H1 (cell line): ENCODE measurements at regions of chr2 and their contacts with region 1.

Region 1: DNA sequence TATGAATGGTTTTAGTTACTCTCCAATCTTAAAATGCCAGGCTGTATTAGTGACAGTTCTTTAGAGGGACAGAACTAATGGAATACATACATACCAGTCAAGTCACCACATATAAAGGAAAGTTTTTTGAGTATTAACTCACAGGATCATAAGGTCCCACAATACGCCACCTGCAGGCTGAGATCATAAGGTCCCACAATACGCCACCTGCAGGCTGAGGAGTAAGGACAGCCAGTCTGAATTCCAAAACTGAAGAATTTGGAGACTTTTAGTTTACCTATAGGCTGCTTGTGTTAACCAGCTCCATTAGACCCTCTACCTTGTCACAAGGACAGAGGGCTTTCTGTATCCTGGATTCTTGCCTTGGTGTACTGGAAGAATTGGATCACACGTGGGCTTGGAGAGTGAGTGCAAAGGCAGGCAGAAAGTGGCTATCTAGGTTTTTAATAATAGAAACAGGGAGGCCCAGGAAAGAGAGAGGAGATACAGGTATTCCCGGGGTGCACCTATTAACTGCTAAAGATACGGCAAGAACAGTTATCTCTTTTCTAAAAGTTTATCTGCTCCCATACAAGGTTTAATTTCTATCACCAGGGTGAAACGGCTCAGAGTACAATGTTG is 234.9 kb upstream of the CYRIA start:
- DNase-seq: peak; percentile 29 to 63
- H3K4me3 ChIP-seq: no peak overlapping the region
- H3K27ac ChIP-seq: no peak overlapping the region
- H3K4me1 ChIP-seq: no peaks in the 10 kb centered on the region
- H3K27me3 ChIP-seq: no peaks in the 10 kb centered on the region
- CTCF ChIP-seq: peak; percentile 69 to 100 (median 94)
- EP300 ChIP-seq: no peak
- POLR2A ChIP-seq: no peak
- RAD21 ChIP-seq: peak; percentile 70 to 78

Region 2: DNA sequence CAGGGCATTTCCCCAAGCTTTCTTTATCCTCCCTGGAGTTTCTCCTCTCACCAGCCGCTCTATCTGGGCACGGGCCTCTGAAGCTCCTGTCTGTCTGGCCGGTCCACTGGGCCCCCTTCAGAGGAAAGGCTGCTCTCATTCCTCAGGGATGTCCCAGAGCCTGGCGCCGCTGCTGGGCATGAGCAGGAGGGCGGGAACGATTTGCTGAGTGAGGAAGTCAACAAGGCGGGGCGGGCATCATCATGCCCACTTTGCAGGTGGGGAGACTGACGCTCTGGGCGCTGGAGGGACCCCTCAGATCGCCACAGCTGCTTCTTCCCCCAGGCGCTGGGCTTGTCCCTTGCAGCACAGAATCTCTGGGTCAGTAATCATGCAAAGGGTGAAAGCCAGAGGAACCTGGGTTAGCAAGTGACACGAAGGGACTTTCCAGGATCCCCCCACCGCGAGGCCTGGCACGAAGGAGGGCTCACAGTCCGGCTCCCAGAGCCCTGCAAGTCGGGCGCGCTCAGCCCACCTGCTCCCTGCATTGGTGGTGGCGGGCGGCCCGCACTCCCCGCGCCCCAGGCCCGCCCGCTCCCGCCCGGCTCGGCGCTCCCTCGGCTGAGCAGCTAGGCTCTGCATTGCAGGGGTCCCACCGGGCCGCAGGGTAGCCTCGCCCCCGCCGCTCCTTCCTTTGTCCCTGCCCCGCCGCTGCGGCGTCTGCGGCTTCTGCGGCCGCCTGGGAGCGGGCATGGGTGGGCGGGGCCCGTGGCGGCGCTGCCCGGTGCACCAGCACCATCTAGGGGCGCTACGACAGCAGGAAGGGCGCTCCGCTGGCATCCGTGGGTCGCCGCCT is 392.6 kb before region 1 on chr2:
- CTCF ChIA-PET with region 1: no interaction called
- POLR2A ChIA-PET with region 1: no interaction called
- DNase-seq: peak; percentile 27 to 82
- H3K4me3 ChIP-seq: peak overlapping the region; percentile 36 to 61 (median 39)
- H3K27ac ChIP-seq: no peak overlapping the region
- H3K4me1 ChIP-seq: peaks cover 0 to 7% (median 6%) of the 10 kb centered on the region in 4 experiments; a peak in 4 of 7 replicates
- H3K27me3 ChIP-seq: peaks cover 0 to 4% (median 0%) of the 10 kb centered on the region in 4 experiments; a peak in 2 of 7 replicates
- CTCF ChIP-seq: peak; percentile 77 to 82 (median 82)
- EP300 ChIP-seq: peak in 1 of 2 experiments; percentile 48; a peak in 1 of 3 replicates
- POLR2A ChIP-seq: no peak
- RAD21 ChIP-seq: peak; percentile 93 to 95

Region 3: GRCh38 chr2:16890081-16890480 is 10.4 kb before region 1 on chr2:
- CTCF ChIA-PET with region 1: interaction called, 14 read pairs
- POLR2A ChIA-PET with region 1: no interaction called
- DNase-seq: peak; percentile 31 to 48
- H3K4me3 ChIP-seq: no peak overlapping the region
- H3K27ac ChIP-seq: no peak overlapping the region
- H3K4me1 ChIP-seq: no peaks in the 10 kb centered on the region; a peak in 1 of 7 replicates
- H3K27me3 ChIP-seq: no peaks in the 10 kb centered on the region
- CTCF ChIP-seq: peak; percentile 25 to 59 (median 59)
- EP300 ChIP-seq: no peak
- POLR2A ChIP-seq: no peak
- RAD21 ChIP-seq: peak; percentile 78 to 79

Region 4: GRCh38 chr2:16911746-16912145 is 11.2 kb after region 1 on chr2:
- CTCF ChIA-PET with region 1: interaction called, 10 read pairs
- POLR2A ChIA-PET with region 1: no interaction called
- DNase-seq: no peak
- H3K4me3 ChIP-seq: no peak overlapping the region
- H3K27ac ChIP-seq: no peak overlapping the region
- H3K4me1 ChIP-seq: peaks cover 0 to 2% (median 0%) of the 10 kb centered on the region in 4 experiments; a peak in 1 of 7 replicates
- H3K27me3 ChIP-seq: no peaks in the 10 kb centered on the region
- CTCF ChIP-seq: no peak
- EP300 ChIP-seq: no peak
- POLR2A ChIP-seq: no peak
- RAD21 ChIP-seq: no peak